ENCODE measurements at regions of chr7 and their contacts with region 1.

Region 1: GRCh38 chr7:101126651-101127280 is at the start of gene SERPINE1:
- DNase-seq: peak; percentile 62
- ATAC-seq: peak; percentile 59
- H3K4me3 ChIP-seq: peak within 1 kb of the TSS; percentile 52
- H3K27ac ChIP-seq: 0 out of 2 replicates have a peak within 1 kb of the TSS, but pooled peaks have one; percentile 21
- H3K4me1 ChIP-seq: peaks cover 40% of the 10 kb centered on the region
- H3K27me3 ChIP-seq: no peaks in the 10 kb centered on the region
- CTCF ChIP-seq: 0 out of 2 replicates have a peak, but pooled peaks have one; percentile 20
- total RNA-seq, gene SERPINE1: 46.1 and 52.5 TPM in 2 replicates

Region 2: GRCh38 chr7:101085162-101085987 is 41.4 kb before region 1 on chr7 and contains the start of gene TRIM56:
- CTCF ChIA-PET with region 1: interaction called, 5 read pairs
- POLR2A ChIA-PET with region 1: interaction called, 17 read pairs
- intact Hi-C with region 1: loop called (anchors 1 kb)
- DNase-seq: peak; percentile 95
- ATAC-seq: peak; percentile 88
- H3K4me3 ChIP-seq: peak within 1 kb of the TSS; percentile 84
- H3K27ac ChIP-seq: peak within 1 kb of the TSS; percentile 95
- H3K4me1 ChIP-seq: peaks cover 23% of the 10 kb centered on the region
- H3K27me3 ChIP-seq: no peaks in the 10 kb centered on the region
- CTCF ChIP-seq: no peak
- total RNA-seq, gene TRIM56: 10.6 and 14.8 TPM in 2 replicates

Region 3: DNA sequence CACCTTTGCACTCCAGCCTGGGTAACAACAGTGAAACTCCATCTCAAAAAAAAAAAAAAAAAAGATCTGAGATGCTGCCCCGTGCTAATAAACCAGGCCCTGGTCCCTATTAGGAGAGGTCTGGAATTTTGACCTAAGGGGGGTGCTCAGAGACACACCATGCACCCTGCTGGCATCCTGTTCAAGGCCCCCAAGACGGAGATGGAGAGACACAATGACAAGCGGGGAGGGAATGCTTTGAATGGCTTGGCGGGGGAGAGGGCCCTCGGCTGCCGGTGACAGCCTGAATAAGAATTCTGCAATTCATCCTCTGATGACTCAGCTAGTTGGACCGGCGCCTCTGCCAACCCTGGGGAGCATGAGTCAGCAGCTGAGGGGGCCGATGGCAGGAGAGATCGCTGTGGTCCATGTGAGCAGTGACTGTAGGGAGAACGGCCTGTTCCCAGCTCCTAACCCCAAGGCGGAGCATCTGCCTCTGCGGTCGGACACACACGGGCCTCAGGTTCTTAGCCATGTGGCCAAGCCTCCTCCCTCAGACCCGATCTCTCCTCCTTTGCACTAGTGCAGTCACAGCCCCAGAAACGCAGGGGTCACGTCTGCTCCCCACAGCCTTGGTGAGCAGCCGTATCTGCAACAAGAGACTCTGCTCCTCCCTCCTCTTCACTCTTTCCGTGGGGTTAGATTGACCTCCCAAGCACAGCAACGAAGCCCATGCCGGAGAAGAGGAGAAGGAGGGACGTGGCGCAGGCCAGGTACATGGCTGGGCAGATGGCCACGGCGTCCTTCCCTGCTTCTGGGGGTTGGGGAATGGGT is 26.6 kb before region 1 on chr7:
- CTCF ChIA-PET with region 1: no interaction called
- POLR2A ChIA-PET with region 1: no interaction called
- intact Hi-C with region 1: loop called (anchors 2 kb)
- DNase-seq: peak; percentile 99
- ATAC-seq: peak; percentile 95
- H3K4me3 ChIP-seq: peak overlapping the region; percentile 9; the same call in 1 of the 2 replicates
- H3K27ac ChIP-seq: peak overlapping the region; percentile 81
- H3K4me1 ChIP-seq: peaks cover 27% of the 10 kb centered on the region
- H3K27me3 ChIP-seq: no peaks in the 10 kb centered on the region
- CTCF ChIP-seq: no peak

Region 4: DNA sequence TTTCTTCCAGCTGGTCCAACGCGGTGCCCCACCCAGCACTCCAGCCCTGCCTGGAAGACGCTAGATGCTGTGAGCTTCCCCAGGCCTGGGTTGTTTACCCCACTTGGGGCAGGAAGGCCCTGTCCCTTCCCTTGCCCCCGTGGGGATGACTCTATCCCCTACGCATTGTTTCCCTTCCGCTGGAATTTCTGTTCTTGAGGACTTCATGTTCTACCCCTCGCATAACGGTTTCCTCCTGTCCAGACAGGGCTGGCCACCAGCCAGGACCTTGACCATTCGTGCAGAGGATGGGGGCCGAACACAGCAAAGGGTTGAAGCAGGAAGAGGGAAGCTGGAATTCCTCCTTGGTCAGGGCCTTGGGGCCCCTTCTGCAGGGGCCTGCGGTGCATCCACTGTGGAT is 14.5 kb before region 1 on chr7:
- CTCF ChIA-PET with region 1: no interaction called
- POLR2A ChIA-PET with region 1: no interaction called
- intact Hi-C with region 1: no loop called
- DNase-seq: no peak
- ATAC-seq: no peak
- H3K4me3 ChIP-seq: no peak overlapping the region
- H3K27ac ChIP-seq: no peak overlapping the region
- H3K4me1 ChIP-seq: peaks cover 29% of the 10 kb centered on the region
- H3K27me3 ChIP-seq: no peaks in the 10 kb centered on the region
- CTCF ChIP-seq: no peak

Region 5: GRCh38 chr7:101162551-101163278 is 35.9 kb after region 1 on chr7:
- CTCF ChIA-PET with region 1: no interaction called
- POLR2A ChIA-PET with region 1: interaction called, 19 read pairs
- intact Hi-C with region 1: no loop called
- DNase-seq: peak; percentile 56
- ATAC-seq: peak; percentile 38
- H3K4me3 ChIP-seq: peak overlapping the region; percentile 53; the same call in 1 of the 2 replicates
- H3K27ac ChIP-seq: peak overlapping the region; percentile 58
- H3K4me1 ChIP-seq: peaks cover 55% of the 10 kb centered on the region
- H3K27me3 ChIP-seq: peaks cover 26% of the 10 kb centered on the region
- CTCF ChIP-seq: no peak

Measured in PC-3 (cell line).